ENCODE measurements at regions of chr19 and their contacts with region 1.

Region 1: DNA sequence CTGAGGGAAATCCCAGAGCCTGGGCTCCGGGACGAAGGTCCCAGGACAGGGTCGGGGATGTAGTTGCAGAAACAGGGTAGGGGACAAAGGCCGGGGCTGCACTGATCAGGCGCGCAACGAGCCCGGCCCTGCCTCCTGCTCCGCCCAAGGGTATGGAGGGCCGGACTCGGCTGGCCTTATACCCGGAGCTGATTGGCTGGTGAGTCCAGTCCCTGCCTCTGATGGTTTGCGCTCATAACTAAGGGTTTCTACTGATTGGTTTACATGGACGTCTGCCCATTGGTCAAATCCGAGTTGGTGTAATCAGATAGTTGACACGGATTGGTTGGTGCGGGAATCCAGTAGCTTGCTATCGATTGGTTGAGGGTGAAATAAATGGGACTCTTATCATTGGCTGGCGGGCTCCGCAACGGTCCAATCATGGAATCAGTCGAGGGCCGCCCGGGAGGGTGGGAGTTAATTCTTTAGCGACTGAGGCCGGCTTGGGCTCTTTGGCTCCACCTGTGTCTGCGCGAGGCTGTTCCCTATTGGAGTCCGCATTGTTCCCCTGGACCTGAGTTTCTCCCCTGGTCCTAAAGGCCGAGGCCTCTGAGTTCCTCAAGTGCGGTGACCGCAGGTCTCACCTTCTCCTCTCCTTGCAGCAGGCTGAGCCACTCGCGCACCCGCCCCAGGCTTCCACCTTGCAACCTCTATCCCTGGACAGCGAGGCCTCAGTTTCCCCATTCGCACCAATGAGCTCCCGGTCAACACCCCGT is 570 bp upstream of the MPND start:
- DNase-seq: peak; percentile 79 to 99 (median 86)
- ATAC-seq: peak; percentile 81
- H3K4me3 ChIP-seq: peak overlapping the region; percentile 93
- H3K4me3 Mint-ChIP-seq: peak overlapping the region; percentile 91
- H3K27ac ChIP-seq: peak overlapping the region; percentile 70 to 92
- H3K27ac Mint-ChIP-seq: peak overlapping the region; percentile 83
- H3K4me1 ChIP-seq: peaks cover 40% of the 10 kb centered on the region
- H3K4me1 Mint-ChIP-seq: peaks cover 37% of the 10 kb centered on the region
- H3K27me3 ChIP-seq: no peaks in the 10 kb centered on the region
- H3K27me3 Mint-ChIP-seq: no peaks in the 10 kb centered on the region
- CTCF ChIP-seq: peak; percentile 34

Region 2: GRCh38 chr19:4182084-4182810 is 160.5 kb before region 1 on chr19 and contains the starts of genes ANKRD24 and SIRT6:
- CTCF ChIA-PET with region 1: no interaction called
- POLR2A ChIA-PET with region 1: no interaction called
- intact Hi-C with region 1: loop called in 1 of 2 experiments (anchors 5 kb)
- DNase-seq: peak; percentile 90 to 98 (median 96)
- ATAC-seq: peak; percentile 80
- H3K4me3 ChIP-seq: peak within 1 kb of the TSS; percentile 96
- H3K4me3 Mint-ChIP-seq: peak within 1 kb of the TSS; percentile 99
- H3K27ac ChIP-seq: peak within 1 kb of the TSS; percentile 66 to 80
- H3K27ac Mint-ChIP-seq: peak within 1 kb of the TSS; percentile 96
- H3K4me1 ChIP-seq: peaks cover 47% of the 10 kb centered on the region
- H3K4me1 Mint-ChIP-seq: peaks cover 32% of the 10 kb centered on the region
- H3K27me3 ChIP-seq: no peaks in the 10 kb centered on the region
- H3K27me3 Mint-ChIP-seq: peaks cover 3% of the 10 kb centered on the region
- CTCF ChIP-seq: no peak
- total RNA-seq, gene ANKRD24: 0.59 to 0.60 TPM
- total RNA-seq, gene SIRT6: 11.2 to 14.2 TPM

Region 3: GRCh38 chr19:4267101-4267900 is 75.5 kb before region 1 on chr19:
- CTCF ChIA-PET with region 1: interaction called, 11 read pairs
- POLR2A ChIA-PET with region 1: interaction called, 9 read pairs
- intact Hi-C with region 1: no loop called
- DNase-seq: peak; percentile 44 to 75 (median 56)
- ATAC-seq: peak; percentile 70
- H3K4me3 ChIP-seq: no peak overlapping the region
- H3K4me3 Mint-ChIP-seq: no peak overlapping the region
- H3K27ac ChIP-seq: no peak overlapping the region
- H3K27ac Mint-ChIP-seq: no peak overlapping the region
- H3K4me1 ChIP-seq: peaks cover 20% of the 10 kb centered on the region
- H3K4me1 Mint-ChIP-seq: peaks cover 18% of the 10 kb centered on the region
- H3K27me3 ChIP-seq: no peaks in the 10 kb centered on the region
- H3K27me3 Mint-ChIP-seq: no peaks in the 10 kb centered on the region
- CTCF ChIP-seq: peak; percentile 79

Region 4: GRCh38 chr19:4288091-4288777 is 54.6 kb before region 1 on chr19:
- CTCF ChIA-PET with region 1: no interaction called
- POLR2A ChIA-PET with region 1: no interaction called
- intact Hi-C with region 1: no loop called
- DNase-seq: no peak
- ATAC-seq: no peak
- H3K4me3 ChIP-seq: no peak overlapping the region
- H3K4me3 Mint-ChIP-seq: no peak overlapping the region
- H3K27ac ChIP-seq: no peak overlapping the region
- H3K27ac Mint-ChIP-seq: no peak overlapping the region
- H3K4me1 ChIP-seq: no peaks in the 10 kb centered on the region
- H3K4me1 Mint-ChIP-seq: no peaks in the 10 kb centered on the region
- H3K27me3 ChIP-seq: no peaks in the 10 kb centered on the region
- H3K27me3 Mint-ChIP-seq: no peaks in the 10 kb centered on the region
- CTCF ChIP-seq: no peak

Region 5: DNA sequence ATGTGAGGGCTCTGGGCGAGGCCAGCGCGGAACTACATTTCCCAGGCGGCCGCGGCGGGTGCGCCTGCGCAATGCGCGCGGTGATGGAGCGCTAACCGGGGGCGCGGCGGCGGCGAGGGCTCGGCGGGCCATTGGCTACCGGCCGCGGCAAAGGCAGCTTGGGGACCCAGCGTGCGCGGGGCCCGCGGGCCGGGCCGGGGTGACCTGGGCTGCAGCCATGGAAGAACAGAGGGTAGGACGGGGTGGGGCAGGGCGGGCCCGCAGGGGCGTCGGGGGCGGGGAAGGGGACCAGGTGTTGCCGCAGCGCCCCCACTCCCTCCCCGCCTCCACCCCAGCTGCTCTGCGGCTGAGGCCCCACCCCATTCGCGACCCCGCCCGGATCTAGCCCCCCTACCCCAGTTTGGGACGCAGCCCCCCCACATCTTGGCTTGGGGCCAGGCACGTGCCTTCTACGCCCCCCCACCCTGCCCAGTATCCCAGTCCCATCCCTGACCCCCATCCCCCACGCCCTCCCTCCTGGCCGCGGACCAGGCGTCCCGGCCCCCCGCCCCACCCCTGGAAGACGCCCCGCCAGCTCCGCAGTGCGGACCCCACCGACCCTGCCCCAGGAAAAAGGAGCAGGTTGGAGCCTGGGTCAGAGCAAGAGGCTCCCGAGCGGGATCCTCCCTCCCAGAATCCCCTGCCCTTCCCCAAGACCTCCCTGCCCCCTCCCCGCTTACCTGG is 38.1 kb before region 1 on chr19 and contains the start of gene FSD1:
- CTCF ChIA-PET with region 1: no interaction called
- POLR2A ChIA-PET with region 1: interaction called, 32 read pairs
- intact Hi-C with region 1: loop called (anchors 2 to 5 kb)
- DNase-seq: peak; percentile 28 to 76 (median 52)
- ATAC-seq: peak; percentile 45
- H3K4me3 ChIP-seq: peak within 1 kb of the TSS; percentile 20
- H3K4me3 Mint-ChIP-seq: peak within 1 kb of the TSS; percentile 56
- H3K27ac ChIP-seq: no peak within 1 kb of the TSS
- H3K27ac Mint-ChIP-seq: peak within 1 kb of the TSS; percentile 88
- H3K4me1 ChIP-seq: peaks cover 36% of the 10 kb centered on the region
- H3K4me1 Mint-ChIP-seq: peaks cover 34% of the 10 kb centered on the region
- H3K27me3 ChIP-seq: peaks cover 0 to 3% of the 10 kb centered on the region in 2 experiments
- H3K27me3 Mint-ChIP-seq: no peaks in the 10 kb centered on the region
- CTCF ChIP-seq: no peak
- total RNA-seq, gene FSD1: 0.98 to 1.0 TPM

Region 6: GRCh38 chr19:4328243-4328990 is 14.4 kb before region 1 on chr19:
- CTCF ChIA-PET with region 1: no interaction called
- POLR2A ChIA-PET with region 1: interaction called, 43 read pairs
- intact Hi-C with region 1: loop called (anchors 1 kb)
- DNase-seq: peak; percentile 84 to 99 (median 96)
- ATAC-seq: peak; percentile 83
- H3K4me3 ChIP-seq: peak overlapping the region; percentile 61
- H3K4me3 Mint-ChIP-seq: peak overlapping the region; percentile 90
- H3K27ac ChIP-seq: no peak overlapping the region
- H3K27ac Mint-ChIP-seq: peak overlapping the region; percentile 86
- H3K4me1 ChIP-seq: peaks cover 31% of the 10 kb centered on the region
- H3K4me1 Mint-ChIP-seq: peaks cover 25% of the 10 kb centered on the region
- H3K27me3 ChIP-seq: no peaks in the 10 kb centered on the region
- H3K27me3 Mint-ChIP-seq: no peaks in the 10 kb centered on the region
- CTCF ChIP-seq: no peak

Region 7: GRCh38 chr19:4369888-4370260 is 27.1 kb after region 1 on chr19:
- CTCF ChIA-PET with region 1: interaction called, 10 read pairs
- POLR2A ChIA-PET with region 1: interaction called, 10 read pairs
- intact Hi-C with region 1: no loop called
- DNase-seq: peak; percentile 58 to 89 (median 70)
- ATAC-seq: peak; percentile 74
- H3K4me3 ChIP-seq: peak overlapping the region; percentile 59
- H3K4me3 Mint-ChIP-seq: peak overlapping the region; percentile 90
- H3K27ac ChIP-seq: peak overlapping the region; percentile 78 to 87
- H3K27ac Mint-ChIP-seq: peak overlapping the region; percentile 90
- H3K4me1 ChIP-seq: peaks cover 75% of the 10 kb centered on the region
- H3K4me1 Mint-ChIP-seq: peaks cover 30% of the 10 kb centered on the region
- H3K27me3 ChIP-seq: no peaks in the 10 kb centered on the region
- H3K27me3 Mint-ChIP-seq: no peaks in the 10 kb centered on the region
- CTCF ChIP-seq: peak; percentile 65

Region 8: DNA sequence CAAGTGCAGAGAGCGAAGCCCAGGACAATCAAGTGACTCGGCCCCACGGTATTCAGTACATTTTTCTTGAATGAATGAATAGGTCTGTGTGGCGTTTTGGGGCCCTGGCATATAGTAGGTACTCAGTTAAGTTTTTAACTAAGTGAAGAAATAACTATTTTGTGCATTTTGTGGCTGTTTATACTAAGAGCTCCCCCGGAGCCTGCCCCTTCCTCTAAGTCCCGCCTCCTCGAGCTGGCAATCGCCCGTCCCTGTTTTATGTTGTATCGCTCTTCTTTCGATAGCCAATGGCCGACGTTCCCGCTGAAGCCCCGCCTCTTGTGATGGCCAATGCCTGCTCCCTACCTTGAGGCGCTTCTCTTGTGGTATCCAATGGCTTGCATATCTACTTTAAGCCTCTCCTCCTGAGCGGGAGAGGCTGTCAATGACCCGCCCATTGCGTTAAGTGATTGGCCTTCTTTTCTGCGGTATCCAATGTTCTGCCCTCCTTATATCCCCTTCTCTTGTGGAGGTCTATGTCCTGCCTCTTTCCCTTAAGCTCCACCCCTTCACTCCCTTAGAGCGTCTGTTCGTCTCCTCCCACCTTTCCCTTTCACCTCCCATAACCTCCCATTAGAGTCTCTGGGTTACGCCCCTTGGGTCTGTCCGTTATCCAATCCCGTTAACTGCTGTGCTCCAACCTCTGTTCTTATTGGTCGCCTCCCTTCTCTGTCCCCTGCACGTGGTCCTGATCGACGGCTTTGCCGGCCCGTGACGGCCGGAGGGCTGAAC is 128.8 kb after region 1 on chr19:
- CTCF ChIA-PET with region 1: interaction called, 4 read pairs
- POLR2A ChIA-PET with region 1: interaction called, 9 read pairs
- intact Hi-C with region 1: loop called in 1 of 2 experiments (anchors 2 kb)
- DNase-seq: peak; percentile 92 to 100 (median 96)
- ATAC-seq: peak; percentile 84
- H3K4me3 ChIP-seq: peak overlapping the region; percentile 64
- H3K4me3 Mint-ChIP-seq: no peak overlapping the region
- H3K27ac ChIP-seq: peak overlapping the region; percentile 71 to 72
- H3K27ac Mint-ChIP-seq: no peak overlapping the region
- H3K4me1 ChIP-seq: peaks cover 35% of the 10 kb centered on the region
- H3K4me1 Mint-ChIP-seq: peaks cover 22% of the 10 kb centered on the region
- H3K27me3 ChIP-seq: no peaks in the 10 kb centered on the region
- H3K27me3 Mint-ChIP-seq: no peaks in the 10 kb centered on the region
- CTCF ChIP-seq: no peak